Left colon (tissue), 2 donors: ENCODE measurements at regions of chr1 and their contacts with region 1.

Region 1: GRCh38 chr1:5745776-5746610 is 246.2 kb downstream of the NPHP4 start:
- DNase-seq: peak; percentile 45 to 64
- ATAC-seq: peak; percentile 94

Region 2: GRCh38 chr1:5514519-5515183 is 231.3 kb before region 1 on chr1:
- intact Hi-C with region 1: loop called in 1 of 2 experiments (anchors 10 kb)
- DNase-seq: peak in 1 of 2 donors; percentile 77
- ATAC-seq: peak; percentile 73

Region 3: GRCh38 chr1:5597991-5598823 is 147.8 kb before region 1 on chr1:
- intact Hi-C with region 1: no loop called
- DNase-seq: no peak
- ATAC-seq: peak; percentile 40